Caco-2 (cell line): ENCODE measurements at regions of chr4 and their contacts with region 1.

Region 1: GRCh38 chr4:151362404-151363164 is 37.2 kb upstream of the SH3D19 start:
- DNase-seq: peak; percentile 86 to 88
- H3K4me3 ChIP-seq: no peak overlapping the region
- H3K4me3 Mint-ChIP-seq: no peak overlapping the region
- H3K27ac Mint-ChIP-seq: no peak overlapping the region
- H3K4me1 ChIP-seq: no peaks in the 10 kb centered on the region
- H3K4me1 Mint-ChIP-seq: peaks cover 12% of the 10 kb centered on the region
- H3K27me3 ChIP-seq: no peaks in the 10 kb centered on the region
- H3K27me3 Mint-ChIP-seq: no peaks in the 10 kb centered on the region
- CTCF ChIP-seq: peak; percentile 90 to 97

Region 2: GRCh38 chr4:151117371-151117962 is 245.1 kb before region 1 on chr4:
- CTCF ChIA-PET with region 1: interaction called, 3 read pairs
- POLR2A ChIA-PET with region 1: no interaction called
- intact Hi-C with region 1: loop called (anchors 1 kb)
- DNase-seq: peak; percentile 58 to 71
- H3K4me3 ChIP-seq: no peak overlapping the region
- H3K4me3 Mint-ChIP-seq: no peak overlapping the region
- H3K27ac Mint-ChIP-seq: no peak overlapping the region
- H3K4me1 ChIP-seq: peaks cover 4% of the 10 kb centered on the region; the same call in 1 of the 2 replicates
- H3K4me1 Mint-ChIP-seq: no peaks in the 10 kb centered on the region
- H3K27me3 ChIP-seq: no peaks in the 10 kb centered on the region
- H3K27me3 Mint-ChIP-seq: no peaks in the 10 kb centered on the region
- CTCF ChIP-seq: peak; percentile 69 to 70

Region 3: DNA sequence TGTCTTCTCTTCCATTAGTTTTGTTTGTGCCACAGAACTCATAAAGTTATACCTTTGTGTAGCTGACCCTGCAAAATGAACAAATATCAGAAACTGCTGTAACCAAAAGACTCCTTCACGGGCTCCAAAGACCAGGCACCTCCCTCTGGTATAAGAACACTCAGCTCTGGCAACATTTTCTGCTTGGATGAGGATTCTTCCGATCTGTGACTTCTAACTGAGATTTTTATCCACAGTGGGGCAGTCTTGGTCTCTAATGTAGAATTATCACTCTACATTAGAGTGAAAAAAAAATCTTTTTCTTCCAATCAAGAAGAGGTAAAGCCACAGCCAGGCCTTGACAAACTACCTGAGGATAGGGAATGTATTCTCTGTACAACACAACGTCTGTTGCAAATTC is 124.1 kb before region 1 on chr4:
- CTCF ChIA-PET with region 1: no interaction called
- POLR2A ChIA-PET with region 1: no interaction called
- intact Hi-C with region 1: loop called (anchors 2 kb)
- DNase-seq: no peak
- H3K4me3 ChIP-seq: no peak overlapping the region
- H3K4me3 Mint-ChIP-seq: no peak overlapping the region
- H3K27ac Mint-ChIP-seq: peak overlapping the region; percentile 22
- H3K4me1 ChIP-seq: peaks cover 10% of the 10 kb centered on the region; the same call in 1 of the 2 replicates
- H3K4me1 Mint-ChIP-seq: peaks cover 3% of the 10 kb centered on the region
- H3K27me3 ChIP-seq: no peaks in the 10 kb centered on the region
- H3K27me3 Mint-ChIP-seq: no peaks in the 10 kb centered on the region
- CTCF ChIP-seq: no peak

Region 4: GRCh38 chr4:151294833-151295496 is 67.6 kb before region 1 on chr4:
- CTCF ChIA-PET with region 1: no interaction called
- POLR2A ChIA-PET with region 1: no interaction called
- intact Hi-C with region 1: loop called (anchors 1 kb)
- DNase-seq: no peak
- H3K4me3 ChIP-seq: no peak overlapping the region
- H3K4me3 Mint-ChIP-seq: no peak overlapping the region
- H3K27ac Mint-ChIP-seq: peak overlapping the region; percentile 62
- H3K4me1 ChIP-seq: peaks cover 8% of the 10 kb centered on the region; the same call in 1 of the 2 replicates
- H3K4me1 Mint-ChIP-seq: peaks cover 29% of the 10 kb centered on the region
- H3K27me3 ChIP-seq: no peaks in the 10 kb centered on the region
- H3K27me3 Mint-ChIP-seq: no peaks in the 10 kb centered on the region
- CTCF ChIP-seq: no peak

Region 5: DNA sequence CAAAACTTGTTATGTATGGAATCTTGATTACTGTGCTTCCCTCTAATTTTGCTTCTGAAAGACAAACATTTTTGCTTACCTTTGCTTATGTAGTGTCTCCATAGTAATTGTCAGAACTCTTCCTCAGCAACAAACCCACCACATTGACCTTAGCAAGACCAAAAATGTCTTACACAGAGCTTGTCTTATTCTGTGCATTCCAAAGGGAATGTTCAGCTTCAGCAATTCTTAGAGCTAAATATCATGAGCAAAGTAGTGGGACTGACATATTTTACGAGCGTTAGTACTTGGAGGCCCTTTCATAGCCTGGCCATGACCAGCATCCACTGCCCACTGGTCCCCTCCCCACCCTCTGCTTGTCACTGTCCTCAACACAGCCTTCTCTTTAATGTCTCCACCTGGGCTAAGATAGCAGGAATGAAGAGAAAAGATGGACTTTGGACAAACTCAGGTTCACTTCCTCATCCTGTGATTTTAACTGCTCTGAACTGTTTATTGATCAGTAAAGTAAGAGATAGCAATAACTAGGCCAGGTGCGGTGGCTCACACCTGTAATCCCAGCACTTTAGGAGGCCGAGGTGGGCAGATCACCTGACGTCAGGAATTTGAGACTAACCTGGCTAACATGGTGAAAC is 21.7 kb before region 1 on chr4:
- CTCF ChIA-PET with region 1: no interaction called
- POLR2A ChIA-PET with region 1: no interaction called
- intact Hi-C with region 1: loop called (anchors 1 kb)
- DNase-seq: peak; percentile 62 to 70
- H3K4me3 ChIP-seq: no peak overlapping the region
- H3K4me3 Mint-ChIP-seq: peak overlapping the region; percentile 39
- H3K27ac Mint-ChIP-seq: peak overlapping the region; percentile 88
- H3K4me1 ChIP-seq: peaks cover 21% of the 10 kb centered on the region
- H3K4me1 Mint-ChIP-seq: peaks cover 24% of the 10 kb centered on the region
- H3K27me3 ChIP-seq: no peaks in the 10 kb centered on the region
- H3K27me3 Mint-ChIP-seq: no peaks in the 10 kb centered on the region
- CTCF ChIP-seq: no peak

Region 6: DNA sequence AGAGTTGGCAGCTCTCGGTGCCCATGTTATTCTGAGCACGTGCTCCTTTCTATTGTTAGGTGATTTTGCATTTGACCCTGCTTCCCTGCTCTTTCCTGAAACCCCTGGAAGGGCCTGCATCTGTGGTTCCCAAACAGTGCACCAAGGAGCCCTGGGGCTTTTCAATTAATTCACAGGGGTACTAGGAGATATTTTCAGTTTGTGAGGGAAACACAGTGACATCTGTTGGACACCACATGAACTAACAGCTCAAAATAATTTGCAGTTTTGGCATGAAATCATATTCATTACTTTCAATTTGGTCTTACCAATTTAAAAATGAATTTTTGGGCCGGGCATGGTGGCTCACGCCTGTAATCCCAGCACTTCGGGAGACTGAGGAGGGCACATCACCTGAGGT is 241.7 kb after region 1 on chr4:
- CTCF ChIA-PET with region 1: interaction called, 5 read pairs
- POLR2A ChIA-PET with region 1: no interaction called
- intact Hi-C with region 1: loop called (anchors 1 kb)
- DNase-seq: no peak
- H3K4me3 ChIP-seq: no peak overlapping the region
- H3K4me3 Mint-ChIP-seq: no peak overlapping the region
- H3K27ac Mint-ChIP-seq: no peak overlapping the region
- H3K4me1 ChIP-seq: peaks cover 18% of the 10 kb centered on the region
- H3K4me1 Mint-ChIP-seq: peaks cover 3% of the 10 kb centered on the region
- H3K27me3 ChIP-seq: no peaks in the 10 kb centered on the region
- H3K27me3 Mint-ChIP-seq: no peaks in the 10 kb centered on the region
- CTCF ChIP-seq: peak; percentile 23 to 62